ENCODE measurements at regions of chrX and their contacts with region 1.

Region 1: DNA sequence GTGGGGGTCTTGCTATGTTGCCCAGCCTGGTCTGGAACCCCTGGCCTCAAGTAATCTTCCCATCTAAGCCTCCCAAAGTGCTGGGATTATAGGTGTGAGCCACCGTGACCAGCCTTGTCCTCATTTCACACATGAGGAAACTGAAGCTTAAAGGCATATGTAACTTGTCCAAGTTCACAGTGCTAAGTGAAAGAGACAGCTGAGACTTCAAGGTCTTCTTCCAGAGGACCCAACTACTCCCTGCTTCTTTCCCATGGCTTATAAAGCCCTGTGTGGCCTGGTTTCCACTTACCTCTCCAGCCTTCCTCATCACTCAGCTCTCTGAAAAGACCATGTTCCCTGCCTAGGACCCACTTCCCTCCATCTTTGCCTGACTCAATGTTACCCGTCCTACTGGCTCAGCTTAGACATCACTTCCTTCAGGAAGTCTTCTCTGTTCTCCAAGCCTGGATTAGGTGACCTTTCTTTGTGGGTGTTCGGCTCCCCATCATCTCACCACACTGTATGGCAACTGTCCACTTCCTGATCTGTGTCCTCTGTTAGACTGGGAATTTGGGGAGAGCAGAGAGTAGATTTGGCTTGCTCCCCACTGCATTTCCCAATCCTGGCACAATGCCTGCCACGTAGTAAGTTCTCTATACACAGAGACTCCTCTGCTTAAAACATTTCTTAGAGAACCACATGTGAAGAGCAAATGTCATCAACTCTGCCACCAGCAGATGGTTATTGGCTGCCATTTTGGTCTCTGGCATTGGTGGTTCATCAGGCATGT is 30.4 kb upstream of the LAMP2 start:
- DNase-seq: peak; percentile 73
- H3K4me3 Mint-ChIP-seq: no peak overlapping the region
- H3K27ac Mint-ChIP-seq: no peak overlapping the region
- H3K4me1 Mint-ChIP-seq: peaks cover under 1% of the 10 kb centered on the region
- H3K27me3 Mint-ChIP-seq: no peaks in the 10 kb centered on the region
- CTCF ChIP-seq: no peak

Region 2: DNA sequence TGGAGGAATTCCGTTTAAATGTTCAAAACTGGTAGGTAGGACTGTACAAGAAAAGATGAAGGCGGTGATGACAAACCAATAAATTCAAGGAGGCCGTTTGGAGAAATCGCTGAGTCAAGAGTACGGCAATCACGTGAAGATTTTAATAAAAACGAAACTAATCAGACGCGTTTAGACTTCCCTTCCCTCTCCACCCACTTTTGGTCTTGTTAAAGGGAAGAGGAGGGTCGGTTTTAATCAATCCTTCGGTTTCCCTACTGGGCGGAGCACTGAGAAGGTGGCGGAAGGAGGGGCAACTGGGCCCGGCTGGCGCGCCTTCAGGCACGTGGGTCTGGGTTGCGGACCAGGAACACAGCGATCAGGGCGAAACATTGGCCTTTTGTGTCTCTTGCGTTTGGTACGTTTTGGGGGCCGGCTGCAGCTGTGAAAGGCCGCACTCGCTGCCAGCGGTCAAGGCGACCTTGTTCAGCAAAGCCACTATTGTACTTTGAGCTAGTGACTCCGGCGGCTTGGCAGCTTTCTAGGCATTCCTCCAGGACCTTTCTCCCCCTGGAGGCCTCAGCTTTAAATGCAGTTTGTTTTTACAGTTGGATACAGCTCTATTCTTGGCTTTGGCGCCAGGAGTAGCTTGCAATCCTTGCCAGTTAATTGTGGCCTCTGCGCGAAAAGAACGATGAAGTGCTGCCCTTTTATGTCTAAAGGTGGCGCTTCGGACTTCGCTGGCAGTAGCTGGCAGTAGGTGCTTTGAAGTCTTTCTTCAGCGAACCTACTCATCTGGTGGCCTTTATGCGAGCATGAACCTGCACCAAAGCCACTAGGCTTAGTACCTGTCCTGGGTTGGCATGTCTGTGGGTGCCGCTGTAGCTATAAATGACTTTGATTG is 13.6 kb before region 1 on chrX:
- CTCF ChIA-PET with region 1: interaction called, 10 read pairs
- POLR2A ChIA-PET with region 1: interaction called, 4 read pairs
- intact Hi-C with region 1: no loop called
- DNase-seq: peak; percentile 88
- H3K4me3 Mint-ChIP-seq: peak overlapping the region; percentile 75
- H3K27ac Mint-ChIP-seq: peak overlapping the region; percentile 94
- H3K4me1 Mint-ChIP-seq: no peaks in the 10 kb centered on the region
- H3K27me3 Mint-ChIP-seq: no peaks in the 10 kb centered on the region
- CTCF ChIP-seq: peak; percentile 43

Region 3: DNA sequence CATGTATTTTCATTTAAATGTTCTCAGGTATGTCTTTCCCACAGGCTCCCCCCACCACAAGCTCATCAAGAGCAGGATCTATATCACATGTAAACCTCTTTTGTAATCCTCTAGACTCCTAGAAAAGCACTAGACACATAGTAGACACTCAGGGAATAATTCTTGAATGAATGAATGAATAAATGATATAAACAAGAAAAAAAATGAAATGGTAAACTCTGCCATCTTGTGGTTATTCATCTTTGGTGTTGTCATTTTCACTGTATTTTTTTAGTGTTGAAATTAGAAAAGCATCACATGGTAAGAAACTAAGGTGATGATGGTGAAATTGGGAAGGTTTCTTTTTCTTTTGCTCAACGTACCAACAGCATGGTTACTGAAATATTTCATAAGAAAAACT is 164.6 kb after region 1 on chrX:
- CTCF ChIA-PET with region 1: interaction called, 16 read pairs
- POLR2A ChIA-PET with region 1: no interaction called
- intact Hi-C with region 1: loop called (anchors 1 kb)
- DNase-seq: peak; percentile 62
- H3K4me3 Mint-ChIP-seq: no peak overlapping the region
- H3K27ac Mint-ChIP-seq: peak overlapping the region; percentile 47
- H3K4me1 Mint-ChIP-seq: peaks cover 10% of the 10 kb centered on the region
- H3K27me3 Mint-ChIP-seq: no peaks in the 10 kb centered on the region
- CTCF ChIP-seq: peak; percentile 46

Region 4: GRCh38 chrX:120769576-120770341 is 270.3 kb after region 1 on chrX:
- CTCF ChIA-PET with region 1: interaction called, 12 read pairs
- POLR2A ChIA-PET with region 1: interaction called, 3 read pairs
- intact Hi-C with region 1: loop called (anchors 1 kb)
- DNase-seq: peak; percentile 85
- H3K4me3 Mint-ChIP-seq: no peak overlapping the region
- H3K27ac Mint-ChIP-seq: peak overlapping the region; percentile 15
- H3K4me1 Mint-ChIP-seq: peaks cover 7% of the 10 kb centered on the region
- H3K27me3 Mint-ChIP-seq: no peaks in the 10 kb centered on the region
- CTCF ChIP-seq: peak; percentile 32

Region 5: DNA sequence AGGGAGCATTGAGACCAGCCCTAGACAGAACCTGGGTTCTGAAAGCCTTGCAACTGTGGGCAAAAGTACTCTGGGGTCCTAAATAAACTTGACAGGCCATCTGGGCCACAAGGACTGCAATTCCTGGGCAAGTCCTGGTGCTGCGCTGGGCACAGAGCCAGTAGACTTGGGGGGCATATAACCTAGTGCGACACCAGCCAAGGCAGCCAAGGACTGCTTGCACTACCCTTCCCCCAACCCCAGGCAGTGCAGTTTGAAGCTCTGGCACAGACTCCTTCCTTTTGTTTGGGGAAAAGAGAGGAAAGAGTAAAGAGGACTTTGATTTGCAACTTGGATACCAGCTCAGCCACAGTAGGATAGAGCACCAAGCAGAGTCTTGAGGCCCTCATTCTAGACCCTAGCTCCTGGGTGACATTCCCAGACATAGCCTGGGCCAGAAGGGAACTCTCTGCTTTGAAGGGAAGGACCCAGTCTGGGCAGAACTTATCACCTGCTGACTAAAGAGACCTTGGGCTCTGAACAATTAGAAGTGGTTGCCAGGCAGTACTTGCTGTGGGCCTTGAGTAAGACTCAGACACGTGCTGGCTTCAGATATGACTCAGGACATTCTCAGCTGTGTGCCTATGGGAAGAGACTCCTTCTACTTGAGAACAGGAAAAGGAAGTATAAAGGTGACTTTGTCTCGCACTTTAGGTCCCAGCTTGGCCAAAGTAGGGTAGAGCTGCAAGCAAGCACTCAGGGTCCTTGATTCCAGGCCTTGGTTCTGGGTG is 1070.8 kb after region 1 on chrX:
- CTCF ChIA-PET with region 1: no interaction called
- POLR2A ChIA-PET with region 1: no interaction called
- intact Hi-C with region 1: loop called (anchors 5 kb)
- DNase-seq: peak; percentile 46
- H3K4me3 Mint-ChIP-seq: no peak overlapping the region
- H3K27ac Mint-ChIP-seq: no peak overlapping the region
- H3K4me1 Mint-ChIP-seq: no peaks in the 10 kb centered on the region
- H3K27me3 Mint-ChIP-seq: no peaks in the 10 kb centered on the region
- CTCF ChIP-seq: no peak